OCI-LY7 (cell line): ENCODE measurements at regions of chr11 and their contacts with region 1.

Region 1: GRCh38 chr11:50030193-50030592 is 2.5 kb upstream of the OR4C45 start:
- DNase-seq: no peak
- H3K4me3 ChIP-seq: no peak overlapping the region
- H3K27ac ChIP-seq: no peak overlapping the region
- H3K4me1 ChIP-seq: no peaks in the 10 kb centered on the region
- CTCF ChIP-seq: no peak

Region 2: GRCh38 chr11:48354677-48355076 is 1675.5 kb before region 1 on chr11:
- CTCF ChIA-PET with region 1: no interaction called
- POLR2A ChIA-PET with region 1: no interaction called
- intact Hi-C with region 1: loop called (anchors 5 kb)
- DNase-seq: no peak
- H3K4me3 ChIP-seq: no peak overlapping the region
- H3K27ac ChIP-seq: no peak overlapping the region
- H3K4me1 ChIP-seq: no peaks in the 10 kb centered on the region
- CTCF ChIP-seq: no peak

Region 3: GRCh38 chr11:50044647-50045046 is 14.5 kb after region 1 on chr11:
- CTCF ChIA-PET with region 1: no interaction called
- POLR2A ChIA-PET with region 1: no interaction called
- intact Hi-C with region 1: no loop called
- DNase-seq: no peak
- H3K4me3 ChIP-seq: no peak overlapping the region
- H3K27ac ChIP-seq: no peak overlapping the region
- H3K4me1 ChIP-seq: no peaks in the 10 kb centered on the region
- CTCF ChIP-seq: no peak

Region 4: DNA sequence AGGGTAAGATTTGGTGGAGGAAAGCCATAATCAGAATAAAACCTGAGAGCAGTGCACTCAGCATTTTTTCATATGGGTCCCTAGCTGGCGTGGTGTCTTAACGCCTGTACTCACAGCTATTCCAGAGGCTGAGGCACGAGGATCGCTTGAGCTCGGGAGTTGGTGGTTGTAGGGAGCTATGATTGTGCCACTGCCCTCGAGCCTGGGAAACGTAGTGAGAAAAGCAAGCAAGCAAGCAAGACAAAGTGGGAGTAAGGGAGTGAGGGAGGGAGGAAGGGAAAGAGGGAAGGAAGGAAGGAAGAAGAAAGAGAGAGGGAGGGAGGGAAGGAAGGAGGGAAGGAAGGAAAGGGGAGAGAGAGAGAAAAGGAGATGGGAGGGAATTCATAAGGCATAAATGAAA is 245.0 kb after region 1 on chr11:
- CTCF ChIA-PET with region 1: no interaction called
- POLR2A ChIA-PET with region 1: no interaction called
- intact Hi-C with region 1: no loop called
- DNase-seq: no peak
- H3K4me3 ChIP-seq: no peak overlapping the region
- H3K27ac ChIP-seq: no peak overlapping the region
- H3K4me1 ChIP-seq: no peaks in the 10 kb centered on the region
- CTCF ChIP-seq: no peak